Gastrocnemius medialis (tissue), 4 donors: ENCODE measurements at regions of chr9 and their contacts with region 1.

Region 1: GRCh38 chr9:132370592-132370991 is 15.8 kb upstream of the SETX start:
- DNase-seq: no peak
- ATAC-seq: no peak
- H3K4me3 ChIP-seq: no peak overlapping the region
- H3K27ac ChIP-seq: no peak overlapping the region
- H3K4me1 ChIP-seq: no peaks in the 10 kb centered on the region
- H3K27me3 ChIP-seq: no peaks in the 10 kb centered on the region
- CTCF ChIP-seq: no peak
- POLR2A ChIP-seq: no peak

Region 2: GRCh38 chr9:132288361-132288760 is 82.2 kb before region 1 on chr9:
- in situ Hi-C with region 1: no loop called
- intact Hi-C with region 1: no loop called
- DNase-seq: no peak
- ATAC-seq: peak in 1 of 2 donors; percentile 65
- H3K4me3 ChIP-seq: no peak overlapping the region
- H3K27ac ChIP-seq: peak overlapping the region in 3 of 4 donors; percentile 26 to 72 (median 39)
- H3K4me1 ChIP-seq: peaks cover 10 to 11% of the 10 kb centered on the region in 2 donors
- H3K27me3 ChIP-seq: no peaks in the 10 kb centered on the region
- CTCF ChIP-seq: no peak
- POLR2A ChIP-seq: no peak

Region 3: GRCh38 chr9:132328580-132328979 is 42.0 kb before region 1 on chr9:
- in situ Hi-C with region 1: no loop called
- intact Hi-C with region 1: loop called (anchors 1 kb)
- DNase-seq: no peak
- ATAC-seq: peak; percentile 67 to 68
- H3K4me3 ChIP-seq: no peak overlapping the region
- H3K27ac ChIP-seq: peak overlapping the region; percentile 55 to 75 (median 64)
- H3K4me1 ChIP-seq: peaks cover 15 to 49% of the 10 kb centered on the region in 2 donors
- H3K27me3 ChIP-seq: no peaks in the 10 kb centered on the region
- CTCF ChIP-seq: no peak
- POLR2A ChIP-seq: no peak